ENCODE measurements at regions of chr17 and their contacts with region 1.

Region 1: DNA sequence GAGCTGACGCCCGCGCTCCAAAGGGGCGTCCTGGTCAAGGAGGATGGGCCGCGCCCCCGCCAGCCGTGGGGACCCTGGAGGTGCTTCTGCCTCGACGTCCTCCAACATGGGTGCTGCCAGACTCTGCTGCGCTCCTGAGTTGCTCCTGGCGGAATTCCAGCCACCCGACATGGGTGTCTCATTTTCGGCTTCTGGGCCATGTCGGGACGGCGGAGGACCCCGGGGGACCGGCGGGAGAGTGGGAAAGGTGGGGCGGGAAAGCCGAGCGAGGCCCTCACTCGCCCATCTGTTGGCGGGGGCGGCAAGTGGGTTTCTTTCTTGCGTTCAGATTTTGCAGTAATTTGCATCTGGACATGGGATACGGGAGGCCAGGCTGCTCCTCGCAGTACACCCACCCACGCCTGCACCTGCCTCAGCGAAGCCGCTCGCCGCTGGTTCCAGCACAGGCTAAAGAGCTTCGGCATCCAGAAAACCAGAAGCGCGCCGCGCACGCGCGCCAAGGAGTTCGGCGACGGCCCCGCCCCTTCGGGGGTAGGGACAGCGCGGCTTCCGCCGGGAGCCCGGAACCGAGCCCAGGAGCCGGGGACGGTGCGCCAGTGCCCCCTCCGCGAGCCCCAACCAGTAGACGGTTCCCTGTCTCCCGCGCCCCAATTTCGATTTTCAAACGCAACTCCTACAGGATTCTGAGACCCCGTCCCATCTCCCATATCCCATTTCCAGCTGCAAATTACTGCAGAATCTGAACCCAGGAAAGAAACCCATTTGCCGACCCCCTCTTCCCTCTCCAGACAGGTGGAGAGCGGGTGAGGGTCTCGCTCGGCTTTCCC is at the start of gene ARMC7:
- DNase-seq: peak; percentile 85 to 89 (median 88)
- H3K4me3 ChIP-seq: peak within 1 kb of the TSS; percentile 69 to 84
- H3K4me3 Mint-ChIP-seq: peak within 1 kb of the TSS; percentile 88 to 93 (median 91)
- H3K27ac ChIP-seq: peak within 1 kb of the TSS; percentile 60
- H3K27ac Mint-ChIP-seq: peak within 1 kb of the TSS; percentile 76 to 96 (median 92)
- H3K4me1 ChIP-seq: peaks cover 41% of the 10 kb centered on the region
- H3K4me1 Mint-ChIP-seq: peaks cover 22 to 42% (median 31%) of the 10 kb centered on the region in 4 donors
- H3K27me3 ChIP-seq: no peaks in the 10 kb centered on the region
- H3K27me3 Mint-ChIP-seq: no peaks in the 10 kb centered on the region
- total RNA-seq, gene ARMC7: 20.0 to 21.9 TPM

Region 2: DNA sequence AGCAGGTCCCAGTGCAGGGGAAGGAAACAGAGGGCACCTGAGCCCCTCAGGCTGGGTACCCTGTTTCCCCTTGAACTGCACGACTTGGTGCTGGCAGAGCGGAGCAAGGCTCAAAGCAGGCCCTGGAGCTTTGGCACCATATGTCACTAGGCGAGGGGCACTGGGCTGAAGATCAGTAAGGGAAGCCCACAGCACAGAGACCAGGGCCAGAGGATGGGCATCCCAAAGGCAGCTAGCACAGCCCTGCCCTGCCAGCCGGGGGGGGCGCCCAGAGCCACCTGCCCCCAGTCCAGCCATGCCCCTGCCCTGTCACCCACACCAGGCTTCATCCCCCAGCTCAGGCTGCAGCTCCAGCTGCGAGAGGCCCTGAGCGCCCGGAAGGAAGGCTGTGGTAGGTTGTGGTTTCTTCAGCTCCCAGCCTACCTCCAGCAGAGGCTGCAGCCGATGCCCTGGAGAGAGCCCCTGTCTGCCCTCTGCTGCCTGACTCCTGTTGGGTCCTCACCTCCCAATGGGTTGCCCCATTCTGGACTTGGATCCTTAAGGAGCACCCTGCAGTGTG is 350.3 kb before region 1 on chr17:
- CTCF ChIA-PET with region 1: no interaction called
- POLR2A ChIA-PET with region 1: no interaction called
- intact Hi-C with region 1: no loop called
- DNase-seq: peak; percentile 63 to 75 (median 64)
- H3K4me3 ChIP-seq: peak overlapping the region; percentile 34 to 54
- H3K4me3 Mint-ChIP-seq: peak overlapping the region; percentile 74 to 90 (median 84)
- H3K27ac ChIP-seq: peak overlapping the region; percentile 65
- H3K27ac Mint-ChIP-seq: peak overlapping the region; percentile 84 to 93 (median 90)
- H3K4me1 ChIP-seq: peaks cover 94% of the 10 kb centered on the region
- H3K4me1 Mint-ChIP-seq: peaks cover 42 to 84% (median 65%) of the 10 kb centered on the region in 4 donors
- H3K27me3 ChIP-seq: no peaks in the 10 kb centered on the region
- H3K27me3 Mint-ChIP-seq: no peaks in the 10 kb centered on the region

Region 3: GRCh38 chr17:75046582-75047289 is 62.9 kb before region 1 on chr17 and contains the starts of genes ATP5PD and KCTD2:
- CTCF ChIA-PET with region 1: interaction called, 12 read pairs
- POLR2A ChIA-PET with region 1: interaction called, 17 read pairs
- intact Hi-C with region 1: loop called (anchors 1 kb)
- DNase-seq: peak; percentile 92 to 95 (median 94)
- H3K4me3 ChIP-seq: peak within 1 kb of the TSS; percentile 62 to 96
- H3K4me3 Mint-ChIP-seq: peak within 1 kb of the TSS; percentile 95 to 100 (median 97)
- H3K27ac ChIP-seq: peak within 1 kb of the TSS; percentile 85
- H3K27ac Mint-ChIP-seq: peak within 1 kb of the TSS; percentile 96 to 98 (median 97)
- H3K4me1 ChIP-seq: peaks cover 30% of the 10 kb centered on the region
- H3K4me1 Mint-ChIP-seq: peaks cover 25 to 63% (median 40%) of the 10 kb centered on the region in 4 donors
- H3K27me3 ChIP-seq: no peaks in the 10 kb centered on the region
- H3K27me3 Mint-ChIP-seq: no peaks in the 10 kb centered on the region
- total RNA-seq, gene ATP5PD: 167 to 171 TPM
- total RNA-seq, gene KCTD2: 31.1 to 31.7 TPM

Region 4: DNA sequence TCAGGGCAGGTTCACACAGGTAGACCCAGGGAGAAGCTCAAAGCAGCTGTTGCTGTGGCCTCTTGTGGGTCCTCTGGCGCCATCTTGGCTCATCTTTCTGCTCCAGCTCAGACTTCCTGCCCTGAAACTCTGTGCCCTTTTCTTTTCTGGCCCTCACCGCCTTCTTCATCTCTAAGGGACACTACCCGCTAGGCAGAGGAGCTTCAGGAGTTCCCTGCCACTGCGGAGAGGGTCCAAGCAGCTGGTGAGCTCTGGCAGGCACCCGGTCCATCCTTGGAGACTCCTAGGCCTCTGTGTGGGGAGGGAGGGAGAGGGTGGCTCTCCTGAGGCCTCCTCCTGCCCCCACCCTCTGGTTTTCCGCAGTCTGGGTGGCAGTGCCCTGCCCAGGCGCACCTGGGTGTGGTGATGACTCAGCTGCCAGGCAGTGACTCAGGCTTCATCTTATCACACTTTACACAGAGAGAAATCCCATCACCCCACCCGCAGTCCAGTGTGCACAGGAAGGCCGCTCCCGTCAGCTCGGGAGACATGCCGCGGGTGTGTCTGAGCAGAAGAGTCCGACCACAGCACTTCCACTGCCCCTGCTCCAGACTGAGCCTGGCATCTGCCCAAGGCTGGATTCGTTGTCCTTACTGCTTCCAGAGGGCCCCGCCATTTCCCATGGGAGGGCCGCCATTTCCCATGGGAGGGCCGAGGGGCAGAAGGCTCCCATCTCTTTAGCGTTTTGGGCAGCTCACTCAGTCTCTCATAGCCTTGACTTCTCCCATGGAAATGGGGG is 14.6 kb after region 1 on chr17:
- CTCF ChIA-PET with region 1: interaction called, 127 read pairs
- POLR2A ChIA-PET with region 1: interaction called, 97 read pairs
- intact Hi-C with region 1: no loop called
- DNase-seq: peak in 4 of 5 donors; percentile 30 to 79 (median 40)
- H3K4me3 ChIP-seq: no peak overlapping the region
- H3K4me3 Mint-ChIP-seq: peak overlapping the region in 7 of 8 donors; percentile 4 to 75 (median 46)
- H3K27ac ChIP-seq: peak overlapping the region; percentile 21
- H3K27ac Mint-ChIP-seq: peak overlapping the region; percentile 67 to 93 (median 85)
- H3K4me1 ChIP-seq: peaks cover 30% of the 10 kb centered on the region
- H3K4me1 Mint-ChIP-seq: peaks cover 24 to 40% (median 30%) of the 10 kb centered on the region in 4 donors
- H3K27me3 ChIP-seq: no peaks in the 10 kb centered on the region
- H3K27me3 Mint-ChIP-seq: no peaks in the 10 kb centered on the region

Region 5: GRCh38 chr17:75154195-75155106 is 44.8 kb after region 1 on chr17 and contains the start of gene JPT1:
- CTCF ChIA-PET with region 1: interaction called, 27 read pairs
- POLR2A ChIA-PET with region 1: interaction called, 5 read pairs
- intact Hi-C with region 1: loop called (anchors 5 kb)
- DNase-seq: peak; percentile 95 to 98 (median 97)
- H3K4me3 ChIP-seq: peak within 1 kb of the TSS; percentile 40 to 85
- H3K4me3 Mint-ChIP-seq: peak within 1 kb of the TSS; percentile 93 to 96 (median 94)
- H3K27ac ChIP-seq: peak within 1 kb of the TSS; percentile 63
- H3K27ac Mint-ChIP-seq: peak within 1 kb of the TSS; percentile 82 to 98 (median 94)
- H3K4me1 ChIP-seq: peaks cover 24% of the 10 kb centered on the region
- H3K4me1 Mint-ChIP-seq: peaks cover 24 to 32% (median 30%) of the 10 kb centered on the region in 4 donors
- H3K27me3 ChIP-seq: no peaks in the 10 kb centered on the region
- H3K27me3 Mint-ChIP-seq: no peaks in the 10 kb centered on the region
- total RNA-seq, gene JPT1: 37.8 to 38.9 TPM

Region 6: GRCh38 chr17:75205037-75205792 is 95.6 kb after region 1 on chr17 and contains the start of gene NUP85:
- CTCF ChIA-PET with region 1: interaction called, 309 read pairs
- POLR2A ChIA-PET with region 1: interaction called, 26 read pairs
- intact Hi-C with region 1: loop called (anchors 1 kb)
- DNase-seq: peak; percentile 88 to 95 (median 93)
- H3K4me3 ChIP-seq: peak within 1 kb of the TSS; percentile 55 to 86
- H3K4me3 Mint-ChIP-seq: peak within 1 kb of the TSS; percentile 93 to 99 (median 96)
- H3K27ac ChIP-seq: peak within 1 kb of the TSS; percentile 80
- H3K27ac Mint-ChIP-seq: peak within 1 kb of the TSS; percentile 99 to 100 (median 99)
- H3K4me1 ChIP-seq: peaks cover 26% of the 10 kb centered on the region
- H3K4me1 Mint-ChIP-seq: peaks cover 15 to 48% (median 24%) of the 10 kb centered on the region in 4 donors
- H3K27me3 ChIP-seq: no peaks in the 10 kb centered on the region
- H3K27me3 Mint-ChIP-seq: no peaks in the 10 kb centered on the region
- total RNA-seq, gene NUP85: 137 to 164 TPM

Region 7: GRCh38 chr17:75261336-75262111 is 151.9 kb after region 1 on chr17 and contains the starts of genes GGA3 and MRPS7:
- CTCF ChIA-PET with region 1: no interaction called
- POLR2A ChIA-PET with region 1: interaction called, 11 read pairs
- intact Hi-C with region 1: no loop called
- DNase-seq: peak; percentile 95 to 99 (median 97)
- H3K4me3 ChIP-seq: peak within 1 kb of the TSS; percentile 77 to 99
- H3K4me3 Mint-ChIP-seq: peak within 1 kb of the TSS; percentile 93 to 99 (median 97)
- H3K27ac ChIP-seq: peak within 1 kb of the TSS; percentile 96
- H3K27ac Mint-ChIP-seq: peak within 1 kb of the TSS; percentile 100
- H3K4me1 ChIP-seq: peaks cover 35% of the 10 kb centered on the region
- H3K4me1 Mint-ChIP-seq: peaks cover 32 to 65% (median 48%) of the 10 kb centered on the region in 4 donors
- H3K27me3 ChIP-seq: no peaks in the 10 kb centered on the region
- H3K27me3 Mint-ChIP-seq: no peaks in the 10 kb centered on the region
- total RNA-seq, gene GGA3: 121 to 122 TPM
- total RNA-seq, gene MRPS7: 34.1 to 36.3 TPM